A673 (cell line): ENCODE measurements at regions of chr2 and their contacts with region 1.

Region 1: GRCh38 chr2:97806738-97807618 is 93.6 kb downstream of the ZAP70 start:
- DNase-seq: peak; percentile 81
- H3K4me3 ChIP-seq: no peak overlapping the region
- H3K27ac ChIP-seq: no peak overlapping the region
- H3K4me1 ChIP-seq: no peaks in the 10 kb centered on the region
- H3K27me3 ChIP-seq: no peaks in the 10 kb centered on the region
- CTCF ChIP-seq: peak; percentile 94

Region 2: GRCh38 chr2:97950329-97951154 is 143.6 kb after region 1 on chr2:
- CTCF ChIA-PET with region 1: no interaction called
- POLR2A ChIA-PET with region 1: no interaction called
- intact Hi-C with region 1: no loop called
- DNase-seq: no peak
- H3K4me3 ChIP-seq: no peak overlapping the region
- H3K27ac ChIP-seq: no peak overlapping the region
- H3K4me1 ChIP-seq: no peaks in the 10 kb centered on the region
- H3K27me3 ChIP-seq: no peaks in the 10 kb centered on the region
- CTCF ChIP-seq: no peak

Region 3: GRCh38 chr2:97995734-97996624 is 189.0 kb after region 1 on chr2 and contains the start of gene TMEM131:
- CTCF ChIA-PET with region 1: no interaction called
- POLR2A ChIA-PET with region 1: no interaction called
- intact Hi-C with region 1: loop called (anchors 10 kb)
- DNase-seq: peak; percentile 93
- H3K4me3 ChIP-seq: peak within 1 kb of the TSS; percentile 83
- H3K27ac ChIP-seq: peak within 1 kb of the TSS; percentile 96
- H3K4me1 ChIP-seq: peaks cover 11% of the 10 kb centered on the region
- H3K27me3 ChIP-seq: no peaks in the 10 kb centered on the region
- CTCF ChIP-seq: no peak
- total RNA-seq, gene TMEM131: 26.2 and 28.9 TPM in 2 replicates

Region 4: DNA sequence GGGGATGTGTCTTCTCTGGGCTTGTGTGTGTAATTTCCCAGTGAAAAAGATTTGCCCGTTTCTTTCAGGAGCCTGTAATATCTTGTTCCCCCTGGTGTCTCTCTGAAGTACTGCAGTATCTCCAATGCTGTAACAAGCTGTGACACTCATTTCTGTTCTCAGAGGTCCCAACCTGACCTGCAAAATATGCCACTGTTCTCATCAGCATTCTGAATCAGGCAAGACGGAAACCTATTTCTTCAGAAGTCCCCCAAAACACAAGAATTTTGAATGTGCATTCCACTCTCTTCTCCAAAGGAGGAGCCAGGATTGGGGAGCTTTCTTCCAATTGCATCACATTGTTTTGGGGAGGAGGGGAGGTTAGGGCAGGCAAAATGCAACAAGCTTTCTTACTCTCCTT is 462.3 kb after region 1 on chr2:
- CTCF ChIA-PET with region 1: interaction called, 5 read pairs
- POLR2A ChIA-PET with region 1: no interaction called
- intact Hi-C with region 1: loop called (anchors 1 kb)
- DNase-seq: peak; percentile 59
- H3K4me3 ChIP-seq: no peak overlapping the region
- H3K27ac ChIP-seq: no peak overlapping the region
- H3K4me1 ChIP-seq: no peaks in the 10 kb centered on the region
- H3K27me3 ChIP-seq: peaks cover 6% of the 10 kb centered on the region
- CTCF ChIP-seq: peak; percentile 71